Motor neuron (in vitro differentiated cells): ENCODE measurements at regions of chr6 and their contacts with region 1.

Region 1: GRCh38 chr6:55276745-55277530 is 50.3 kb upstream of the GFRAL start:
- ATAC-seq: peak in 2 of 8 experiments; percentile 70 to 72
- H3K4me3 ChIP-seq: no peak overlapping the region
- H3K27ac ChIP-seq: no peak overlapping the region
- H3K4me1 ChIP-seq: no peaks in the 10 kb centered on the region

Region 2: GRCh38 chr6:55469951-55470366 is 193.0 kb after region 1 on chr6:
- in situ Hi-C with region 1: no loop called
- ATAC-seq: no peak
- H3K4me3 ChIP-seq: no peak overlapping the region
- H3K27ac ChIP-seq: no peak overlapping the region
- H3K4me1 ChIP-seq: no peaks in the 10 kb centered on the region

Region 3: GRCh38 chr6:55941702-55942101 is 664.8 kb after region 1 on chr6:
- in situ Hi-C with region 1: loop called in 1 of 9 experiments (anchors 25 kb)
- ATAC-seq: no peak
- H3K4me3 ChIP-seq: no peak overlapping the region
- H3K27ac ChIP-seq: no peak overlapping the region
- H3K4me1 ChIP-seq: no peaks in the 10 kb centered on the region

Region 4: DNA sequence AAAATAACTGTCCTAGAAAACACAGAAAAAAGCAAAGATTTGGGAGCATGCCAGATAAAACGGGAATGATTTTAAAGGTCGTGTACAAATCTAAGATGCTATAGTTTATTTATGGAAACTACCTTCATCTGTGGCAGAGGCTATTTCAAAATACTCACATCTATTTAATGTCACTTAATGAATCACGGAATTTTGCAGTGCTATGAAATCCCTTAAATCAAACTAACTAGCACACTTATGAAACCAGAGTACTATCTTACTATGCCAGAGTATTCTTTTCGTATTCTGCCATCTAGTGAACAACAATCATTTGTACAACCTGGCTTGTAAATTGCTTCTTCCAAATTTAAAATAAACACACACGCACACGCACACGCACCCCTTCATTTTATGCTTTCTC is 676.4 kb after region 1 on chr6:
- in situ Hi-C with region 1: loop called in 2 of 9 experiments (anchors 25 kb)
- ATAC-seq: peak in 3 of 8 experiments; percentile 75 to 78 (median 76)
- H3K4me3 ChIP-seq: no peak overlapping the region
- H3K27ac ChIP-seq: no peak overlapping the region
- H3K4me1 ChIP-seq: no peaks in the 10 kb centered on the region